ENCODE measurements at regions of chr7 and their contacts with region 1.

Region 1: DNA sequence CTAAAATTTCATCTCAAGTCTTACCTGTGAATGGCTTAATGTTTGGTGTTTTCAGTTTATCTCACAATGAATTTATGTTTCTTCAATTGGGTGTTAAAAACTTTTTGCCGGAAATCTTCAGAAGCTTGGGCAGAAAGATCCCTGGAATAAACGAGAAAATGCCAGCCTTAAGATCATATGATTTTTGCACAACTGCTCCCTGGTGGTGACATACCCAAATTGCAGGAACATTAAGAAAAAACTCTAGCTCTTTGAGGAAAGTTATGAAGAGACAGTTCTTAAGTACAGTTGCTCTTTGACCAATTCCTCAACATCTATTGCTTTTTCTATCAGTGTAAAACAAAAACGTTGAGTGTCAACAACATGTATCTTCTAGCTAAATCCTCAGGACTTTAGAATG is 48.2 kb upstream of the CREB5 start:
- DNase-seq: no peak
- H3K4me3 ChIP-seq: no peak overlapping the region
- H3K27ac ChIP-seq: no peak overlapping the region
- H3K4me1 ChIP-seq: peaks cover 0 to 6% (median 0%) of the 10 kb centered on the region in 4 experiments; a peak in 2 of 7 replicates
- H3K27me3 ChIP-seq: no peaks in the 10 kb centered on the region
- CTCF ChIP-seq: peak in 1 of 3 experiments; percentile 50; a peak in 2 of 4 replicates
- EP300 ChIP-seq: no peak
- POLR2A ChIP-seq: no peak
- RAD21 ChIP-seq: peak; percentile 25 to 27; a peak in 3 of 4 replicates

Region 2: GRCh38 chr7:28298870-28299518 is 65.1 kb before region 1 on chr7:
- CTCF ChIA-PET with region 1: interaction called, 24 read pairs
- POLR2A ChIA-PET with region 1: no interaction called
- DNase-seq: peak; percentile 29 to 59
- H3K4me3 ChIP-seq: no peak overlapping the region
- H3K27ac ChIP-seq: no peak overlapping the region
- H3K4me1 ChIP-seq: peaks cover 0 to 2% (median 1%) of the 10 kb centered on the region in 4 experiments; a peak in 2 of 7 replicates
- H3K27me3 ChIP-seq: no peaks in the 10 kb centered on the region
- CTCF ChIP-seq: peak; percentile 16 to 82 (median 72)
- EP300 ChIP-seq: no peak
- POLR2A ChIP-seq: no peak
- RAD21 ChIP-seq: peak; percentile 82 to 90

Region 3: GRCh38 chr7:28329661-28330363 is 34.3 kb before region 1 on chr7:
- CTCF ChIA-PET with region 1: interaction called, 31 read pairs
- POLR2A ChIA-PET with region 1: no interaction called
- DNase-seq: no peak
- H3K4me3 ChIP-seq: no peak overlapping the region
- H3K27ac ChIP-seq: no peak overlapping the region
- H3K4me1 ChIP-seq: no peaks in the 10 kb centered on the region
- H3K27me3 ChIP-seq: no peaks in the 10 kb centered on the region
- CTCF ChIP-seq: no peak
- EP300 ChIP-seq: no peak
- POLR2A ChIP-seq: no peak
- RAD21 ChIP-seq: no peak

Region 4: DNA sequence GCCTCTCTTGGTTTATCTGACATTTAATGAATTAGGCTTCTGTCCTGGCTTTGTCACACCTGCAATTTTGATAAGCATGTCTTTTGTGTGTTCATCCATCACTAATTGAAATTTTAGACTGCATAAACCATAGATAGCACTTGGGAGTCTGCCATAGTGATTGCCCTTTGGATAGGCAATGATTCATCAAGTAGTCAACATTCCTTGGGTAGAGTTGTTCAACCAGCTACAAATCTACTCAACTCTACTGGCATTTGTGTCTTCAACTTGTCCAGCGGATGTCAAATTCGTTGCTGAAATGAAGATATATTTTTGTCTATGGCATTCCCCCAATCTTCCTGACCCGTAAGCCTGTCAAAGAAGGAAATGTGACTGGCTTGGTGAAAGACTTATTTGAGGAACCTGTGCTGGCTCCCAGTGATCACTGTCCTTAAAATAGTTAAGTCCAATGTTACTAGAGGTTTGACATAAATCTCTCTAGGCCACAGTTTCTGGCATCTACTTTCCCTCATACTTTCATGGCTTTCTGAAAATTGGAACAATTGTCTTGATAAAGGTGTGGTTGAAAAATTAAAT is 14.6 kb after region 1 on chr7:
- CTCF ChIA-PET with region 1: interaction called, 39 read pairs
- POLR2A ChIA-PET with region 1: interaction called, 3 read pairs
- DNase-seq: no peak
- H3K4me3 ChIP-seq: no peak overlapping the region
- H3K27ac ChIP-seq: no peak overlapping the region
- H3K4me1 ChIP-seq: no peaks in the 10 kb centered on the region
- H3K27me3 ChIP-seq: no peaks in the 10 kb centered on the region
- CTCF ChIP-seq: no peak
- EP300 ChIP-seq: no peak
- POLR2A ChIP-seq: no peak
- RAD21 ChIP-seq: no peak

Region 5: GRCh38 chr7:28389504-28390395 is 25.7 kb after region 1 on chr7:
- CTCF ChIA-PET with region 1: interaction called, 10 read pairs
- POLR2A ChIA-PET with region 1: no interaction called
- DNase-seq: no peak
- H3K4me3 ChIP-seq: peak overlapping the region in 1 of 4 experiments; percentile 38; a peak in 1 of 8 replicates
- H3K27ac ChIP-seq: no peak overlapping the region
- H3K4me1 ChIP-seq: no peaks in the 10 kb centered on the region
- H3K27me3 ChIP-seq: no peaks in the 10 kb centered on the region
- CTCF ChIP-seq: peak in 2 of 3 experiments; percentile 36 to 48; a peak in 2 of 4 replicates
- EP300 ChIP-seq: no peak
- POLR2A ChIP-seq: no peak
- RAD21 ChIP-seq: peak; percentile 65 to 71

Measured in H1 (cell line).